B cell (primary cell): ENCODE measurements at regions of chr20 and their contacts with region 1.

Region 1: GRCh38 chr20:1325173-1326030 is 3.5 kb downstream of the SDCBP2 start:
- DNase-seq: peak; percentile 99
- ATAC-seq: peak; percentile 89
- H3K4me3 ChIP-seq: peak overlapping the region; percentile 75 to 99 (median 93)
- H3K4me3 Mint-ChIP-seq: no peak overlapping the region
- H3K27ac ChIP-seq: peak overlapping the region; percentile 92 to 98
- H3K27ac Mint-ChIP-seq: no peak overlapping the region
- H3K4me1 ChIP-seq: peaks cover 27 to 28% of the 10 kb centered on the region in 2 donors
- H3K4me1 Mint-ChIP-seq: peaks cover 31% of the 10 kb centered on the region
- H3K27me3 ChIP-seq: no peaks in the 10 kb centered on the region
- H3K27me3 Mint-ChIP-seq: no peaks in the 10 kb centered on the region
- CTCF ChIP-seq: no peak

Region 2: GRCh38 chr20:543369-544152 is 781.8 kb before region 1 on chr20 and contains the start of gene CSNK2A1:
- CTCF ChIA-PET with region 1: no interaction called
- POLR2A ChIA-PET with region 1: no interaction called
- intact Hi-C with region 1: loop called (anchors 10 kb)
- DNase-seq: peak; percentile 99
- ATAC-seq: peak; percentile 91
- H3K4me3 ChIP-seq: peak within 1 kb of the TSS; percentile 30 to 98 (median 85)
- H3K4me3 Mint-ChIP-seq: peak within 1 kb of the TSS; percentile 95
- H3K27ac ChIP-seq: peak within 1 kb of the TSS; percentile 93 to 99
- H3K27ac Mint-ChIP-seq: peak within 1 kb of the TSS; percentile 100
- H3K4me1 ChIP-seq: peaks cover 33 to 36% of the 10 kb centered on the region in 2 donors
- H3K4me1 Mint-ChIP-seq: peaks cover 53% of the 10 kb centered on the region
- H3K27me3 ChIP-seq: peaks cover 0 to 4% (median 2%) of the 10 kb centered on the region in 4 experiments
- H3K27me3 Mint-ChIP-seq: peaks cover 4% of the 10 kb centered on the region
- CTCF ChIP-seq: no peak
- total RNA-seq, gene CSNK2A1: 125 and 135 TPM in 2 replicates

Region 3: DNA sequence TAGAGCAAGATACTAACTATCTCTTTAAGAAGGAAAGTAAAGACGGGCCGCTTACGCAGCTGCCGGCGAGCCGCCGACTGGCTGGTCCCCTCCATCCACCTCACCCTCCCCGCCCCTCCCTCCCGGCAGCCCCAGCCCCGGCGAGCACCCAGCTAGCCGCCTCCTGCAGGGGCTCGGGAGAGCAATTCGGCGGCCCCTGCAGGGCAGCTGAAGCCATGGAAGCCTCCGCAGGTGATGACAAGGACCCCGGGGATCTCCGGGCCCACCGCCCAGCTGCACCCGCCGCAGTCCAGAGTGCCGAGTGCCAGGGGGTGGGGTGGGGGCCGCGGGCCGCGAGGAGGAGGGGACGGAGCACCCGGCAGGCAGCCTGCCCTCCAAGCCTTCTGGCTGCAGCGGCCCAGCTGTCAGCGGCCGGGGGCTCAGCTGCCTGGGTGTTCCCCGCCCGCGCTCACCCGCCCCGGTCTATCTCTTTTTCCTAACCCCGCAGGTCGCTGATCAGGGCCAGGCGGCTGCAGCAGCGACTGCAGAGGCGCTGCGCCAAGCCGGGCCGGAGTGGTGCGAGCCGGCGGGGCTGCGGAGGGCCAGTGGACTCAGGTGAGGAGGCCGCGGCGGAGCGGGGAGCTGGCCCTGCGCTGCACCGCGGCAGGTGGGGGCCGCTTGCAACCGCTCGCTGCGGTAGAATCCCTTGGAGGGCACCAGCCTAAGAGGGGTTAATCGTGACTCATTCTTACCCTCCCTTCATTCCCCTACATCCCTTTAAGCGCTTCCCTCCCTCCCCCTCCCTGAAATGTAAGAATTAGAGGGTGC is 59.0 kb before region 1 on chr20 and contains the start of gene SNPH:
- CTCF ChIA-PET with region 1: no interaction called
- POLR2A ChIA-PET with region 1: no interaction called
- intact Hi-C with region 1: loop called (anchors 1 kb)
- DNase-seq: peak; percentile 76
- ATAC-seq: peak; percentile 89
- H3K4me3 ChIP-seq: peak within 1 kb of the TSS; percentile 3 to 70 (median 54)
- H3K4me3 Mint-ChIP-seq: peak within 1 kb of the TSS; percentile 91
- H3K27ac ChIP-seq: no peak within 1 kb of the TSS
- H3K27ac Mint-ChIP-seq: peak within 1 kb of the TSS; percentile 79
- H3K4me1 ChIP-seq: peaks cover 9 to 15% of the 10 kb centered on the region in 2 donors
- H3K4me1 Mint-ChIP-seq: peaks cover 13% of the 10 kb centered on the region
- H3K27me3 ChIP-seq: peaks cover 0 to 17% (median 9%) of the 10 kb centered on the region in 4 experiments
- H3K27me3 Mint-ChIP-seq: peaks cover 8% of the 10 kb centered on the region
- CTCF ChIP-seq: no peak
- total RNA-seq, gene SNPH: 2.1 and 3.0 TPM in 2 replicates

Region 4: DNA sequence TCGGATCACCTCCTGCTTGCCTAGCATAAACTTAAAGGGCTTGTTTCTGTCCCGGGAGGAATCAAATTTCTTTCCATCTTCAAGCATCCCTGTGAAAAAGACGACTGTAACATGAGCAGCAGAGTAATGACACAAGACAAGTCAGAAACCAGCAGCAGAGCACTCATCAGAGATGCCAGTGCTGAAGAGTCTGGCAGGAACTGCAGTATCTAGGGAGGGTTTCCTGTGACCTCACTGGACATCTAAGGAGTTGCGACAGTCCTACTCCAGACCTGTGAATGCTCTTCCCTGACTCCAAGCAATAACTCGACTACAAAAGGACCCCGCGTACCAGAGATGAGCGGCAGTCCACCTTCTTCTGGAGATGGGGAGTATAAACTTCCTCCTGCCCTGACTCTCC is 50.1 kb after region 1 on chr20:
- CTCF ChIA-PET with region 1: interaction called, 3 read pairs
- POLR2A ChIA-PET with region 1: interaction called, 3 read pairs
- intact Hi-C with region 1: loop called (anchors 5 kb)
- DNase-seq: no peak
- ATAC-seq: no peak
- H3K4me3 ChIP-seq: no peak overlapping the region
- H3K4me3 Mint-ChIP-seq: no peak overlapping the region
- H3K27ac ChIP-seq: peak overlapping the region in 1 of 2 donors; percentile 60
- H3K27ac Mint-ChIP-seq: no peak overlapping the region
- H3K4me1 ChIP-seq: peaks cover 37 to 45% of the 10 kb centered on the region in 2 donors
- H3K4me1 Mint-ChIP-seq: peaks cover 54% of the 10 kb centered on the region
- H3K27me3 ChIP-seq: no peaks in the 10 kb centered on the region
- H3K27me3 Mint-ChIP-seq: no peaks in the 10 kb centered on the region
- CTCF ChIP-seq: no peak

Region 5: GRCh38 chr20:1437235-1437904 is 112.0 kb after region 1 on chr20:
- CTCF ChIA-PET with region 1: interaction called, 14 read pairs
- POLR2A ChIA-PET with region 1: no interaction called
- intact Hi-C with region 1: loop called (anchors 1 kb)
- DNase-seq: peak; percentile 83
- ATAC-seq: peak; percentile 51
- H3K4me3 ChIP-seq: no peak overlapping the region
- H3K4me3 Mint-ChIP-seq: no peak overlapping the region
- H3K27ac ChIP-seq: no peak overlapping the region
- H3K27ac Mint-ChIP-seq: peak overlapping the region; percentile 50
- H3K4me1 ChIP-seq: peaks cover 20 to 23% of the 10 kb centered on the region in 2 donors
- H3K4me1 Mint-ChIP-seq: peaks cover 35% of the 10 kb centered on the region
- H3K27me3 ChIP-seq: no peaks in the 10 kb centered on the region
- H3K27me3 Mint-ChIP-seq: peaks cover 3% of the 10 kb centered on the region
- CTCF ChIP-seq: peak; percentile 89